Activated B cell treated with CpG ODN at 0.5 μM for 24 hours (primary cell): ENCODE measurements at regions of chr14 and their contacts with region 1.

Region 1: DNA sequence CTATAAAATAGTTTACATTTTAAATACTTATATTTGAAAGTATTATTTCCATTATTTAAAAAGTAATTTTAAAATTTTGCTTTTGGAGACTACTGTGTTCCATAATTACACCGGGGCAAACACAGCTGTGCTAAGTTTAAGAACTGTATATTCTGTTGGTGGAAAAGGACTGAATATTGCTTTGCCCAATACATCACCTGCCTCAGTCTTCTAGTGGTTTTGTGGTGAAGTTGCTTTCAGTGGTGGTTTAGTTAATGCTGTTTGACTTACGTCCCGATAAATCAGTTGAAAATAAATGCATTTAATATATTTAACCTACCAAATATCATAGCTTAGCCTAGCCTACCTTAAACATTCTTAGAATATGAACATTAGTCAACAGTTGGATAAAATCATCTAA is 23.4 kb downstream of the FBXO34 start:
- DNase-seq: no peak
- ATAC-seq: no peak
- H3K4me3 Mint-ChIP-seq: no peak overlapping the region
- H3K27ac Mint-ChIP-seq: no peak overlapping the region
- H3K4me1 Mint-ChIP-seq: peaks cover 21% of the 10 kb centered on the region
- H3K27me3 Mint-ChIP-seq: no peaks in the 10 kb centered on the region
- CTCF ChIP-seq: no peak

Region 2: GRCh38 chr14:55170526-55170925 is 124.1 kb before region 1 on chr14:
- CTCF ChIA-PET with region 1: no interaction called
- POLR2A ChIA-PET with region 1: no interaction called
- intact Hi-C with region 1: no loop called
- DNase-seq: no peak
- ATAC-seq: no peak
- H3K4me3 Mint-ChIP-seq: no peak overlapping the region
- H3K27ac Mint-ChIP-seq: no peak overlapping the region
- H3K4me1 Mint-ChIP-seq: no peaks in the 10 kb centered on the region
- H3K27me3 Mint-ChIP-seq: no peaks in the 10 kb centered on the region
- CTCF ChIP-seq: no peak

Region 3: DNA sequence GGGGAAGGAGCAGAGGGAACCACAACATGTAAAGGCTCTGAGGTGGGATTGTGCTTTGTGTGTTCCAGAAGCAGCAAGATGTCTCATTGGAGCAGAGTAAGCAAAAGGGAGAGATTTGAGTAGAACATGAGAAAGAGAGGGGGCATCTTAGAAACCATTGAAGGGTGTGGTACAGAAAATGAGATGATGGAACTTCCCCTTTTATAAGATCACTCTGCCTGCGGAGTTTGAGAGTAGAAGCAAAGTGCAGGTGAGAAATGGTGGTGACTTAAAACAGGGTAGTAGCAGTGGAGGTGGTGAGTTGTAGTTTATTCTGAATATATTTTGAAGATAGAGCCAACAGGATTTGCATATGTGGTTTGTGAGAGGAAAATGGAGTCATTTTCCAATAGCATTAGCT is 32.6 kb after region 1 on chr14:
- CTCF ChIA-PET with region 1: no interaction called
- POLR2A ChIA-PET with region 1: no interaction called
- intact Hi-C with region 1: loop called (anchors 5 kb)
- DNase-seq: no peak
- ATAC-seq: peak; percentile 89
- H3K4me3 Mint-ChIP-seq: peak overlapping the region; percentile 8
- H3K27ac Mint-ChIP-seq: peak overlapping the region; percentile 87
- H3K4me1 Mint-ChIP-seq: peaks cover 43% of the 10 kb centered on the region
- H3K27me3 Mint-ChIP-seq: no peaks in the 10 kb centered on the region
- CTCF ChIP-seq: no peak